K562 (cell line): ENCODE measurements at regions of chr7 and their contacts with region 1.

Region 1: GRCh38 chr7:97117372-97118188 is at the start of gene SDHAF3:
- DNase-seq: peak; percentile 97 to 100 (median 97)
- ATAC-seq: peak; percentile 79
- H3K4me3 ChIP-seq: peak within 1 kb of the TSS; percentile 73
- H3K27ac ChIP-seq: peak within 1 kb of the TSS; percentile 89
- H3K4me1 ChIP-seq: peaks cover 11 to 14% of the 10 kb centered on the region in 2 experiments
- H3K27me3 ChIP-seq: no peaks in the 10 kb centered on the region
- CTCF ChIP-seq: peak; percentile 30 to 43 (median 36); a peak in 4 of 6 replicates
- EP300 ChIP-seq: peak; percentile 63
- POLR2A ChIP-seq: peak; percentile 98
- RAD21 ChIP-seq: no peak
- polyA plus RNA-seq, gene SDHAF3: 336 to 403 TPM

Region 2: DNA sequence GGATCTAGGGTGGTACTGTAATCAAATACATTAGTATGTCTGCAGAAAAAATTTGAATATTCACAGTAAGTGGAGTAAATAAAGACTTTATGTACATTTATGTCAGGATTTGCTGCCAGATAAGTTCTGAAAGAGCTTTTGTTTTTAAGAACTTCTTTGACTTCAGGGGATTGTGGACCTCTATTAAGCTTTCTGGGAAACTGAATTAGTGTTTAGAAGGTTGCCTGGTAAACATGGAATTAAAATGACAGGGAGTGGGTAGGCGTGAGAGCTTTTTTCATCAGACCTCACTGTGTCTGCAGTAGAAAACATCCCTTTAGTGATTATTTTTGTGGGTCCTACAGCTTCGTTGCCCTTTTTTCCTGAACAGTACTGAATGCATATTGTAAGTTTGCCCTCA is 15.6 kb after region 1 on chr7:
- CTCF ChIA-PET with region 1: no interaction called
- POLR2A ChIA-PET with region 1: interaction called, 11 read pairs
- in situ Hi-C with region 1: no loop called
- intact Hi-C with region 1: no loop called
- DNase-seq: no peak
- ATAC-seq: no peak
- H3K4me3 ChIP-seq: no peak overlapping the region
- H3K27ac ChIP-seq: no peak overlapping the region
- H3K4me1 ChIP-seq: peaks cover 6 to 12% of the 10 kb centered on the region in 2 experiments; a peak in 4 of 5 replicates
- H3K27me3 ChIP-seq: no peaks in the 10 kb centered on the region
- CTCF ChIP-seq: no peak
- EP300 ChIP-seq: no peak
- POLR2A ChIP-seq: no peak
- RAD21 ChIP-seq: no peak

Region 3: GRCh38 chr7:97179454-97180104 is 62.0 kb after region 1 on chr7:
- CTCF ChIA-PET with region 1: no interaction called
- POLR2A ChIA-PET with region 1: no interaction called
- in situ Hi-C with region 1: no loop called
- intact Hi-C with region 1: loop called (anchors 1 kb)
- DNase-seq: peak; percentile 71 to 80 (median 76)
- ATAC-seq: peak; percentile 96
- H3K4me3 ChIP-seq: no peak overlapping the region
- H3K27ac ChIP-seq: no peak overlapping the region
- H3K4me1 ChIP-seq: no peaks in the 10 kb centered on the region
- H3K27me3 ChIP-seq: no peaks in the 10 kb centered on the region
- CTCF ChIP-seq: peak; percentile 70 to 82 (median 71)
- EP300 ChIP-seq: no peak
- POLR2A ChIP-seq: no peak
- RAD21 ChIP-seq: peak; percentile 62 to 65

Region 4: DNA sequence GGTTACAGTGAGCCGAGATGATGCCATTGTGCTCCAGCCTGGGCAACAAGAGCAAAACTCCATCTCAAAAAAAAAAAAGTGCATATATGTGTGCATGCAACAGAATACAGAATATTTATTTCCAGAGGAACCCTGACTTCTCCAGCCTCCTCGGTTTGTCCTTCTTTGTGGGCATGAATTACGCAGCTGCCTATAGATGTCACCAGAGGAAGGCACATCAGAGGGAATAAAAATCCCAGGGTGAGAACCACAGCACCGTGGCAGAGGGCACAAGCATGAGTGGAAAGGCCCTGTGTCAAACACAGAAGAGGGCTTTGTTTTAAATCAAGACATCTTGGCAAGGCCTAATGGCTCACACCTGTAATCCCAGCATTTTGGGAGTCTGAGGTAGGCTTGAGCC is 896.8 kb after region 1 on chr7:
- CTCF ChIA-PET with region 1: no interaction called
- POLR2A ChIA-PET with region 1: no interaction called
- in situ Hi-C with region 1: loop called (anchors 10 kb)
- intact Hi-C with region 1: no loop called
- DNase-seq: no peak
- ATAC-seq: no peak
- H3K4me3 ChIP-seq: no peak overlapping the region
- H3K27ac ChIP-seq: no peak overlapping the region
- H3K4me1 ChIP-seq: peaks cover 0 to 2% of the 10 kb centered on the region in 2 experiments; a peak in 2 of 5 replicates
- H3K27me3 ChIP-seq: peaks cover 3 to 27% of the 10 kb centered on the region in 2 experiments; a peak in 2 of 5 replicates
- CTCF ChIP-seq: no peak
- EP300 ChIP-seq: no peak
- POLR2A ChIP-seq: no peak
- RAD21 ChIP-seq: no peak